Breast epithelium (tissue), 4 donors: ENCODE measurements at regions of chr1 and their contacts with region 1.

Region 1: GRCh38 chr1:1441002-1441888 is 5.8 kb downstream of the VWA1 start:
- DNase-seq: peak in 1 of 2 donors; percentile 63
- H3K4me3 ChIP-seq: no peak overlapping the region
- H3K27ac ChIP-seq: peak overlapping the region in 1 of 2 donors; percentile 4
- H3K4me1 ChIP-seq: peaks cover 0 to 17% of the 10 kb centered on the region in 2 donors
- H3K27me3 ChIP-seq: no peaks in the 10 kb centered on the region
- CTCF ChIP-seq: peak; percentile 66 to 88 (median 69)
- POLR2A ChIP-seq: no peak

Region 2: DNA sequence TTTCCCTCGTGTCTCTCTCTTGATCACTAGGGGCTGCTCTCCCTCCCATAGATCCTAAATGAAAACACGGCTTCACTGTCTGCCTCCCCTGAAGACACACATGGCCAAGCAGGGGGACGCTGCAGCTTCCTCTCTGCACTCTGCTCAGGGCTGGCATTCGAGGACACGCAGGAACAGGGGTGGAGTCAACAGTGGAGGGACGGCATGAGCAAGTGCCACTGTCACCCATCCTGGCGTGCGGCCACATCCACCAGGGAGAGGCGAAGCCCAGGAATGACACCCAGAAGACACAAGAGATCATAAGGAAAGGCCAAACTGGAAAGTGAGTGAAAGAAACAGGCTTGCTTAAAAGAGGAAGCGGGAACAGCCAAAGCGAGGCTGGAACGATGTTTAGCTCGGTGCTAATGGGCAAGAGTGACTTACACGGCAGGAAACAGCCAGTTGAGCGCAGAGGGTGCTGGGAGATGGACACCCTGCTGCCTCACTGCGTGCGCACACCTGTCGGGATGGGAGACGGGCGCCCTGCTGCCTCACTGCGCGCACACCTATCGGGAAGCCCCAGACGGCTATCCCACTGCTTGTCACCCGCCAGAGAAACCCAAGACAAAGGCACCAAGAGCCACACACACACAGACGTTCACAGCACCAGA is 181.2 kb before region 1 on chr1:
- intact Hi-C with region 1: loop called (anchors 5 kb)
- DNase-seq: no peak
- H3K4me3 ChIP-seq: no peak overlapping the region
- H3K27ac ChIP-seq: no peak overlapping the region
- H3K4me1 ChIP-seq: no peaks in the 10 kb centered on the region
- H3K27me3 ChIP-seq: no peaks in the 10 kb centered on the region
- CTCF ChIP-seq: no peak
- POLR2A ChIP-seq: no peak

Region 3: GRCh38 chr1:1406817-1407635 is 34.2 kb before region 1 on chr1 and contains the start of gene MRPL20:
- intact Hi-C with region 1: no loop called
- DNase-seq: peak; percentile 92 to 94
- H3K4me3 ChIP-seq: peak within 1 kb of the TSS; percentile 87 to 97 (median 96)
- H3K27ac ChIP-seq: peak within 1 kb of the TSS; percentile 89 to 91
- H3K4me1 ChIP-seq: peaks cover 5 to 7% of the 10 kb centered on the region in 2 donors
- H3K27me3 ChIP-seq: no peaks in the 10 kb centered on the region
- CTCF ChIP-seq: no peak
- POLR2A ChIP-seq: peak; percentile 70
- total RNA-seq, gene MRPL20: 127 to 149 (median 147) TPM

Region 4: DNA sequence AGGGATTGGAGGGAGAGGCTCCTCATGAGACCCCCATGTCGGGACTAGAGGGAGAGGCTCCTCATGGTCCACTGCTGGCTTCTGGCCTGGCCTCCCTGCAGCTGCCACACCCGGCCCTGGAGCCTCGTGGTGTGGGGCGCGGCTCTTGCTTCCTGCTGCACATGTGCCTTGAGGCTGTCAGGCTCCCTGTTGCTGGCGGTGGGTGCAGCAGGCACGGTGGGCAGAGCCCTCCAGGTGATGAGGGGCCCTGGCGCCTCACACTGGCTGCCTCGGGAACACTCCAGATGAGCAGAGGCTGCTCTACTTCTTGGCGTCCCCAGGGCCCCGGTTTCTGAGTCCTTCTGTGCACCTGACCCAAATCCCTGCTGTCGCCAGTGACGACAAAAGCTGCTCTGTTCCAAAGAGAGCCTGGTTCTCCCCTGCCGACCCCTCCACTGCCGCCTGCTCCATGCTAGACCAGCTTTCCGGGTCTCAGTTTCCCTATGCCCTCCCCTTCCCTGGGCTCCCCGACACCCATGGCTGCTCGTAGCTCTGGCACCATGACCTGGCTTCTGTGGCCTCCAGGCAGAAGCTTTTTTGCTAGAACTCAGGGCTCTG is 20.6 kb after region 1 on chr1:
- intact Hi-C with region 1: no loop called
- DNase-seq: no peak
- H3K4me3 ChIP-seq: peak overlapping the region in 2 of 3 donors; percentile 49 to 61
- H3K27ac ChIP-seq: peak overlapping the region; percentile 68 to 69
- H3K4me1 ChIP-seq: no peaks in the 10 kb centered on the region
- H3K27me3 ChIP-seq: no peaks in the 10 kb centered on the region
- CTCF ChIP-seq: no peak
- POLR2A ChIP-seq: no peak

Region 5: DNA sequence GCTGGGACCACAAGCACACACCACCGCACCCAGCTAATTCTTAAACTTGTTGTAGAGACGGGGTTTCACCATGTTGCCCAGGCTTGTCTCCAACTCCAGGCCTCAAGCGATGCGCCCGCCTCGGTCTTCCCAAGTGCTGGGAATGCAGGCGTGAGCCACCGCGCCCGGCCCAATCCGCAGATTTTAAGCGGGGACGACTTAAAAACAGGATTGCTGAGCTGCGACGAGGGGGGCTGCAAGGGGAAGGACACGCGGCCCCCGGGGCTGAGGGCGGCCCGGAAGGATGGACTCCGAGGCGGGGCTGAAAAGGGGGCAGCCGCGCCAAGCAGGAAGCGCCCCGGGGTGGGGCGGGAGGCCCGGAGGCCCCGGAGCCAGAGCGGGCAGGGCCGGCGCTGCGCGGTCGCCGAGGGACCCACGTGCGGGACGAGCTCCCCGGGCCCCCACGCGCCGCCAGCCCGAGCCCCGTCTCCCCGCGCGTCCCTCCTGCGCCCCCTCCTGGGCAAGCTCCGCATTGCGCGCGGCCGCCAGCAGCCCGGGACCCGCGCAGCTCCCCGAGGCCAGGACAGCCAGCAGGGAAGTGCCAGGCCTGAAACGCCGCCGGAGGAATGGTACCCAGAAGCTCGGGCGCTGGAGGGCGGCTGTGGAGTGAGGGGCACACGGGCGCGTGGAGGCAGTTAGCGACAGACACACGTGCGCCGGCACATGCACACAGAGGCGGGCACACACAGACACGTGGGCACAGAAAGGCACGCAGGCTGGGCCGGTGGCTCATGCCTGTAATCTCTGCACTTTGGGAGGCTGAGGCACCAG is 603.5 kb after region 1 on chr1:
- intact Hi-C with region 1: no loop called
- DNase-seq: peak; percentile 42 to 79
- H3K4me3 ChIP-seq: peak overlapping the region; percentile 22 to 66 (median 46)
- H3K27ac ChIP-seq: no peak overlapping the region
- H3K4me1 ChIP-seq: peaks cover 3 to 4% of the 10 kb centered on the region in 2 donors
- H3K27me3 ChIP-seq: peaks cover 3 to 12% of the 10 kb centered on the region in 2 donors
- CTCF ChIP-seq: peak; percentile 66 to 95 (median 68)
- POLR2A ChIP-seq: no peak